ENCODE measurements at regions of chr13 and their contacts with region 1.

Region 1: GRCh38 chr13:27620377-27621115 is at the start of gene LNX2:
- DNase-seq: peak; percentile 94 to 98 (median 97)
- ATAC-seq: peak; percentile 83
- H3K4me3 ChIP-seq: peak within 1 kb of the TSS; percentile 67 to 96
- H3K4me3 Mint-ChIP-seq: peak within 1 kb of the TSS; percentile 96
- H3K27ac ChIP-seq: peak within 1 kb of the TSS; percentile 83 to 98
- H3K27ac Mint-ChIP-seq: peak within 1 kb of the TSS; percentile 97
- H3K4me1 ChIP-seq: peaks cover 36% of the 10 kb centered on the region
- H3K4me1 Mint-ChIP-seq: peaks cover 63% of the 10 kb centered on the region
- H3K27me3 ChIP-seq: no peaks in the 10 kb centered on the region
- H3K27me3 Mint-ChIP-seq: no peaks in the 10 kb centered on the region
- CTCF ChIP-seq: no peak
- total RNA-seq, gene LNX2: 3.0 to 3.5 TPM

Region 2: GRCh38 chr13:26221721-26222519 is 1398.6 kb before region 1 on chr13 and contains the start of gene RNF6:
- CTCF ChIA-PET with region 1: no interaction called
- POLR2A ChIA-PET with region 1: no interaction called
- intact Hi-C with region 1: loop called in 1 of 2 experiments (anchors 10 kb)
- DNase-seq: peak; percentile 73 to 97 (median 86)
- ATAC-seq: peak; percentile 92
- H3K4me3 ChIP-seq: peak within 1 kb of the TSS; percentile 97 to 99
- H3K4me3 Mint-ChIP-seq: peak within 1 kb of the TSS; percentile 99
- H3K27ac ChIP-seq: peak within 1 kb of the TSS; percentile 90 to 98
- H3K27ac Mint-ChIP-seq: peak within 1 kb of the TSS; percentile 100
- H3K4me1 ChIP-seq: peaks cover 26% of the 10 kb centered on the region
- H3K4me1 Mint-ChIP-seq: peaks cover 45% of the 10 kb centered on the region
- H3K27me3 ChIP-seq: no peaks in the 10 kb centered on the region
- H3K27me3 Mint-ChIP-seq: no peaks in the 10 kb centered on the region
- CTCF ChIP-seq: no peak
- total RNA-seq, gene RNF6: 50.3 to 55.0 TPM

Region 3: GRCh38 chr13:27251166-27252091 is 369.1 kb before region 1 on chr13 and contains the start of gene RPL21:
- CTCF ChIA-PET with region 1: no interaction called
- POLR2A ChIA-PET with region 1: interaction called, 3 read pairs
- intact Hi-C with region 1: loop called (anchors 1 to 2 kb)
- DNase-seq: peak; percentile 85 to 98 (median 91)
- ATAC-seq: peak; percentile 88
- H3K4me3 ChIP-seq: peak within 1 kb of the TSS; percentile 88 to 93
- H3K4me3 Mint-ChIP-seq: peak within 1 kb of the TSS; percentile 99
- H3K27ac ChIP-seq: peak within 1 kb of the TSS; percentile 96 to 98
- H3K27ac Mint-ChIP-seq: peak within 1 kb of the TSS; percentile 100
- H3K4me1 ChIP-seq: peaks cover 30% of the 10 kb centered on the region
- H3K4me1 Mint-ChIP-seq: peaks cover 57% of the 10 kb centered on the region
- H3K27me3 ChIP-seq: no peaks in the 10 kb centered on the region
- H3K27me3 Mint-ChIP-seq: no peaks in the 10 kb centered on the region
- CTCF ChIP-seq: no peak
- total RNA-seq, gene RPL21: 2,340 to 2,437 TPM

Region 4: GRCh38 chr13:27424246-27425157 is 196.0 kb before region 1 on chr13 and contains the start of gene GTF3A:
- CTCF ChIA-PET with region 1: interaction called, 3 read pairs
- POLR2A ChIA-PET with region 1: interaction called, 49 read pairs
- intact Hi-C with region 1: loop called (anchors 1 kb)
- DNase-seq: peak; percentile 74 to 95 (median 87)
- ATAC-seq: peak; percentile 57
- H3K4me3 ChIP-seq: peak within 1 kb of the TSS; percentile 76 to 83
- H3K4me3 Mint-ChIP-seq: peak within 1 kb of the TSS; percentile 82
- H3K27ac ChIP-seq: peak within 1 kb of the TSS; percentile 85 to 95
- H3K27ac Mint-ChIP-seq: peak within 1 kb of the TSS; percentile 97
- H3K4me1 ChIP-seq: peaks cover 43% of the 10 kb centered on the region
- H3K4me1 Mint-ChIP-seq: peaks cover 48% of the 10 kb centered on the region
- H3K27me3 ChIP-seq: no peaks in the 10 kb centered on the region
- H3K27me3 Mint-ChIP-seq: no peaks in the 10 kb centered on the region
- CTCF ChIP-seq: no peak
- total RNA-seq, gene GTF3A: 157 TPM

Region 5: DNA sequence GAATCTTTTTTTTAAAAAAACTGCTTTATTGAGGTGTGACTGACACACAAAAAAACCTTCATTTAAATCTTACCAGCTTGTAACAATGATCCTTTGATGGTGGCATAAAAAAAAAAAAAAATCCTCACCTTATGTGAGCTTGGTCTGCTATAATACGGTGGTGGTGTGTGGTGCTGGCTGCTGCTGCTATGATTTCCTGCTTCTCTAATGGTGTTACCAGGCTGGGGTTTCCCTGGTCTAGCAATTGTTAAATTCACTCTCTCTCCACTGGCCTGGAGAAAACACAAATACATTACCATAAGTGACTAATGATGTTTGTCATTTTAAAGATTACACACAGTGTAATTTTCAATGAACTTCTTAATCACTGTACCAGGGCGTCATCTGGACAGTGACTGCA is 60.8 kb before region 1 on chr13:
- CTCF ChIA-PET with region 1: no interaction called
- POLR2A ChIA-PET with region 1: interaction called, 18 read pairs
- intact Hi-C with region 1: no loop called
- DNase-seq: peak in 3 of 9 experiments; percentile 26 to 78 (median 70)
- ATAC-seq: peak; percentile 84
- H3K4me3 ChIP-seq: no peak overlapping the region
- H3K4me3 Mint-ChIP-seq: no peak overlapping the region
- H3K27ac ChIP-seq: no peak overlapping the region
- H3K27ac Mint-ChIP-seq: peak overlapping the region; percentile 15
- H3K4me1 ChIP-seq: no peaks in the 10 kb centered on the region
- H3K4me1 Mint-ChIP-seq: peaks cover 20% of the 10 kb centered on the region
- H3K27me3 ChIP-seq: no peaks in the 10 kb centered on the region
- H3K27me3 Mint-ChIP-seq: no peaks in the 10 kb centered on the region
- CTCF ChIP-seq: no peak

Region 6: GRCh38 chr13:27792393-27793218 is 172.1 kb after region 1 on chr13 and contains the start of gene GSX1:
- CTCF ChIA-PET with region 1: no interaction called
- POLR2A ChIA-PET with region 1: no interaction called
- intact Hi-C with region 1: loop called (anchors 5 kb)
- DNase-seq: peak in 8 of 9 experiments; percentile 7 to 59 (median 43)
- ATAC-seq: peak; percentile 79
- H3K4me3 ChIP-seq: peak within 1 kb of the TSS; percentile 42 to 50
- H3K4me3 Mint-ChIP-seq: peak within 1 kb of the TSS; percentile 87
- H3K27ac ChIP-seq: no peak within 1 kb of the TSS
- H3K27ac Mint-ChIP-seq: no peak within 1 kb of the TSS
- H3K4me1 ChIP-seq: peaks cover 26% of the 10 kb centered on the region
- H3K4me1 Mint-ChIP-seq: peaks cover 40% of the 10 kb centered on the region
- H3K27me3 ChIP-seq: peaks cover 45 to 48% of the 10 kb centered on the region in 2 experiments
- H3K27me3 Mint-ChIP-seq: peaks cover 70% of the 10 kb centered on the region
- CTCF ChIP-seq: no peak
- total RNA-seq, gene GSX1: not detected

Region 7: GRCh38 chr13:28658796-28659620 is 1038.5 kb after region 1 on chr13 and contains the start of gene POMP:
- CTCF ChIA-PET with region 1: no interaction called
- POLR2A ChIA-PET with region 1: no interaction called
- intact Hi-C with region 1: loop called in 1 of 2 experiments (anchors 2 kb)
- DNase-seq: peak; percentile 79 to 95 (median 93)
- ATAC-seq: peak; percentile 77
- H3K4me3 ChIP-seq: peak within 1 kb of the TSS; percentile 72 to 73
- H3K4me3 Mint-ChIP-seq: peak within 1 kb of the TSS; percentile 98
- H3K27ac ChIP-seq: peak within 1 kb of the TSS; percentile 85 to 97
- H3K27ac Mint-ChIP-seq: peak within 1 kb of the TSS; percentile 99
- H3K4me1 ChIP-seq: peaks cover 33% of the 10 kb centered on the region
- H3K4me1 Mint-ChIP-seq: peaks cover 62% of the 10 kb centered on the region
- H3K27me3 ChIP-seq: no peaks in the 10 kb centered on the region
- H3K27me3 Mint-ChIP-seq: no peaks in the 10 kb centered on the region
- CTCF ChIP-seq: no peak
- total RNA-seq, gene POMP: 34.7 to 38.0 TPM

Measured in CD8-positive, alpha-beta T cell (primary cell).